ENCODE measurements at regions of chr4 and their contacts with region 1.

Region 1: GRCh38 chr4:118270492-118270891 is 82.3 kb downstream of the PRSS12 start:
- DNase-seq: peak; percentile 63
- H3K4me3 ChIP-seq: no peak overlapping the region
- H3K27ac ChIP-seq: no peak overlapping the region
- H3K4me1 ChIP-seq: no peaks in the 10 kb centered on the region
- H3K27me3 ChIP-seq: peaks cover 16 to 27% of the 10 kb centered on the region in 2 experiments
- CTCF ChIP-seq: peak; percentile 21 to 32
- POLR2A ChIP-seq: no peak

Region 2: GRCh38 chr4:117134386-117134785 is 1136.1 kb before region 1 on chr4:
- CTCF ChIA-PET with region 1: interaction called, 24 read pairs
- POLR2A ChIA-PET with region 1: no interaction called
- dilution Hi-C with region 1: no loop called
- intact Hi-C with region 1: loop called (anchors 1 kb)
- DNase-seq: peak; percentile 43
- H3K4me3 ChIP-seq: no peak overlapping the region
- H3K27ac ChIP-seq: no peak overlapping the region
- H3K4me1 ChIP-seq: no peaks in the 10 kb centered on the region
- H3K27me3 ChIP-seq: no peaks in the 10 kb centered on the region
- CTCF ChIP-seq: peak; percentile 15 to 24
- POLR2A ChIP-seq: no peak

Region 3: GRCh38 chr4:117817301-117817700 is 453.2 kb before region 1 on chr4:
- CTCF ChIA-PET with region 1: no interaction called
- POLR2A ChIA-PET with region 1: no interaction called
- dilution Hi-C with region 1: no loop called
- intact Hi-C with region 1: no loop called
- DNase-seq: no peak
- H3K4me3 ChIP-seq: no peak overlapping the region
- H3K27ac ChIP-seq: no peak overlapping the region
- H3K4me1 ChIP-seq: no peaks in the 10 kb centered on the region
- H3K27me3 ChIP-seq: no peaks in the 10 kb centered on the region
- CTCF ChIP-seq: no peak
- POLR2A ChIP-seq: no peak

Region 4: GRCh38 chr4:117893207-117893606 is 377.3 kb before region 1 on chr4:
- CTCF ChIA-PET with region 1: no interaction called
- POLR2A ChIA-PET with region 1: no interaction called
- dilution Hi-C with region 1: no loop called
- intact Hi-C with region 1: no loop called
- DNase-seq: no peak
- H3K4me3 ChIP-seq: no peak overlapping the region
- H3K27ac ChIP-seq: no peak overlapping the region
- H3K4me1 ChIP-seq: no peaks in the 10 kb centered on the region
- H3K27me3 ChIP-seq: no peaks in the 10 kb centered on the region
- CTCF ChIP-seq: no peak
- POLR2A ChIP-seq: no peak

Region 5: GRCh38 chr4:118076958-118077766 is 193.3 kb before region 1 on chr4:
- CTCF ChIA-PET with region 1: interaction called, 6 read pairs
- POLR2A ChIA-PET with region 1: no interaction called
- dilution Hi-C with region 1: no loop called
- intact Hi-C with region 1: loop called (anchors 1 kb)
- DNase-seq: peak; percentile 24
- H3K4me3 ChIP-seq: no peak overlapping the region
- H3K27ac ChIP-seq: no peak overlapping the region
- H3K4me1 ChIP-seq: no peaks in the 10 kb centered on the region
- H3K27me3 ChIP-seq: peaks cover 4% of the 10 kb centered on the region in 2 experiments
- CTCF ChIP-seq: peak; percentile 61 to 72
- POLR2A ChIP-seq: no peak

Region 6: DNA sequence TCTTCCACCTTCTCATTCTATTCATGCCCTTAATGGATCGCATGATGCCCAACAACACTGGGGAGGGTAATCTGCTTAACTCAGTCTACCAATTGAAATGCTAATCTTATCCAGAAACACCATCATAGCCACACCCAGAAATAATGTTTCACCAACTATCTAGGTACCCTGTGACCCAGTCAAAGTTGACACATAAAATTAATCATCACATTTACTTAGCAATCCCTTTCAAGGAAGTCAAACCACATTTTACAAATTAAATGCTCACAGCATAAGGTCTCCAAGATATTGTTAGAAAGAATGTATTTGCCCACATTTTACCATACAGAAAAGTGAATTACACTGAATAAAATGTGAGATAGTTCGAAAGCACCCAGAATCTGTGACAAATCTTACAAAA is 10.2 kb before region 1 on chr4:
- CTCF ChIA-PET with region 1: interaction called, 14 read pairs
- POLR2A ChIA-PET with region 1: no interaction called
- dilution Hi-C with region 1: no loop called
- intact Hi-C with region 1: no loop called
- DNase-seq: no peak
- H3K4me3 ChIP-seq: no peak overlapping the region
- H3K27ac ChIP-seq: no peak overlapping the region
- H3K4me1 ChIP-seq: no peaks in the 10 kb centered on the region
- H3K27me3 ChIP-seq: peaks cover 2 to 6% of the 10 kb centered on the region in 2 experiments
- CTCF ChIP-seq: no peak
- POLR2A ChIP-seq: no peak

Region 7: GRCh38 chr4:118997601-118998000 is 727.1 kb after region 1 on chr4:
- CTCF ChIA-PET with region 1: no interaction called
- POLR2A ChIA-PET with region 1: no interaction called
- dilution Hi-C with region 1: no loop called
- intact Hi-C with region 1: no loop called
- DNase-seq: no peak
- H3K4me3 ChIP-seq: no peak overlapping the region
- H3K27ac ChIP-seq: no peak overlapping the region
- H3K4me1 ChIP-seq: no peaks in the 10 kb centered on the region
- H3K27me3 ChIP-seq: peaks cover 3 to 6% of the 10 kb centered on the region in 2 experiments
- CTCF ChIP-seq: no peak
- POLR2A ChIP-seq: no peak

Measured in endothelial cell of umbilical vein (primary cell).